ENCODE measurements at regions of chr19 and their contacts with region 1.

Region 1: GRCh38 chr19:52962394-52963246 is at the start of gene ZNF816:
- DNase-seq: peak; percentile 99
- ATAC-seq: peak; percentile 100
- total RNA-seq, gene ZNF816: 4.4 TPM

Region 2: GRCh38 chr19:52922841-52923777 is 39.5 kb before region 1 on chr19 and contains the start of gene ZNF888:
- intact Hi-C with region 1: loop called (anchors 2 kb)
- DNase-seq: peak; percentile 95
- ATAC-seq: peak; percentile 100
- total RNA-seq, gene ZNF888: 1.3 TPM

Region 3: GRCh38 chr19:52942386-52943133 is 20.1 kb before region 1 on chr19:
- intact Hi-C with region 1: loop called (anchors 1 kb)
- DNase-seq: peak; percentile 96
- ATAC-seq: peak; percentile 99

Region 4: GRCh38 chr19:52993323-52994178 is 30.9 kb after region 1 on chr19:
- intact Hi-C with region 1: loop called (anchors 2 kb)
- DNase-seq: peak; percentile 87
- ATAC-seq: peak; percentile 93